Mammary epithelial cell (primary cell): ENCODE measurements at regions of chr11 and their contacts with region 1.

Region 1: DNA sequence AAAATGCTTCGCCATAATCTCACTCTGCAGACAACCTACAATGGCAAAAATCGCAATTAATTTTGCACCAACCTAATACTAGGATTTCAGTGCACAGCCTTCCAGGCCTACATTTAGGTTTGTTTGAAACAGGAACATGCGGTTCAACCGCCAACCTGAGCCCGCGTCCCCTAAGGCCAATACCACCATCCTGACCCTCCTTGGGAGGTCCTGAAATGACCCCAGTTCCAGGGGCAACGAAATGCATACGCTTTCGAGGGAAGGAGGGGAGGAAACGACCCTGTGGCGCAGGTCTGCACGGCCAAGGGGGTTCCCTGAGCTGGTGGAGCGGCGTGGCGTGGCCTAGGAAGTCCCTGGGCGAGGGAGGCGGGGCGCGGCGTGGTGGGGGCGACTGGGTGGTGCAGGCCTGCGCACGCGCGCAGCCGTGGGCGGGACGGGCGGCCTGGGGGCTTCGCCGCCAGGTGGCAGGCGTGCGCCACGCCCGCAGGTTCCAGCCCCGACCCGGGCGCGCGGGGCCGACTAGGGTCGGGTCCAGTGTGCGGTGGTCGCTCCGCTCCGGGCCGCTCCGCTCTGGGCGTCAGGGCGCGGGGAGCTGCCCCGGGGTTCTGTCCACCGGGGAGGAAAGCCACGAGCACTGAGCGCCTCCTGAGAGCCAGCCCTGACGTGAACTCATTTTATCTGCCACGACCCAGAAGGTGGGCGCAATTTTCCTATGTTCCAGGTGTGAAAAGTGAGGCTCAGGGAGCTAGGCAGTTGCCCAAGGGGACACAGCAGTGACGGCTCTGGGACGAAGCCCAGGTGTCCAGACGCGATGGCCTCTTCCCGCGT is 94.1 kb downstream of the SWAP70 start:
- DNase-seq: peak; percentile 57
- H3K4me3 ChIP-seq: peak overlapping the region; percentile 41 to 47 (median 43)
- H3K27ac ChIP-seq: peak overlapping the region; percentile 79
- H3K4me1 ChIP-seq: peaks cover 72% of the 10 kb centered on the region
- H3K27me3 ChIP-seq: no peaks in the 10 kb centered on the region
- CTCF ChIP-seq: peak; percentile 42 to 55

Region 2: GRCh38 chr11:9565822-9566560 is 192.0 kb before region 1 on chr11:
- CTCF ChIA-PET with region 1: no interaction called
- dilution Hi-C with region 1: no loop called
- in situ Hi-C with region 1: no loop called
- intact Hi-C with region 1: loop called (anchors 2 kb)
- DNase-seq: peak; percentile 100
- H3K4me3 ChIP-seq: peak overlapping the region in 1 of 3 experiments; percentile 12
- H3K27ac ChIP-seq: peak overlapping the region; percentile 100
- H3K4me1 ChIP-seq: peaks cover 53% of the 10 kb centered on the region
- H3K27me3 ChIP-seq: no peaks in the 10 kb centered on the region
- CTCF ChIP-seq: no peak

Region 3: GRCh38 chr11:9802291-9802861 is 44.4 kb after region 1 on chr11:
- CTCF ChIA-PET with region 1: no interaction called
- dilution Hi-C with region 1: no loop called
- in situ Hi-C with region 1: no loop called
- intact Hi-C with region 1: loop called (anchors 2 kb)
- DNase-seq: peak; percentile 83
- H3K4me3 ChIP-seq: no peak overlapping the region
- H3K27ac ChIP-seq: peak overlapping the region; percentile 89
- H3K4me1 ChIP-seq: peaks cover 29% of the 10 kb centered on the region
- H3K27me3 ChIP-seq: no peaks in the 10 kb centered on the region
- CTCF ChIP-seq: no peak

Region 4: DNA sequence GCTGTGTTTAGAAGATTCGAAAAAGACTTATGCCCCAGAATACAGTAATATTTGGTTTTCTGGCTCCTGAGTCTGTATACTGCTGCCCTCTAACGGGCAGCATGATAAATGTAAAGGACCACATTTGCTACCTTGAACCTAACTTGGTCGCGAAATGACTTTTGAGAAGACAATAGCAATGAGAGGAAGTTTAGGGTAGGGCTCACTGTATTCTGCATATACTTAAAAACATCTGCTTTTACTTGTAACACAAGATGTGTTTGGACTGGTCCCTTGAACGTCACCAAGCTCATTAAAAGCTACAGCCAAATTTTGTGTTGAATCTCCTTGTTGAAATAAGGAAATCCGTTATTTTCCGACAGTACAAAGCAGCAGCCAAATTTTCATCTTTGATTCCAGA is 215.0 kb after region 1 on chr11:
- CTCF ChIA-PET with region 1: interaction called, 9 read pairs
- dilution Hi-C with region 1: no loop called
- in situ Hi-C with region 1: loop called (anchors 10 kb)
- intact Hi-C with region 1: loop called (anchors 1 kb)
- DNase-seq: peak; percentile 39
- H3K4me3 ChIP-seq: no peak overlapping the region
- H3K27ac ChIP-seq: no peak overlapping the region
- H3K4me1 ChIP-seq: no peaks in the 10 kb centered on the region
- H3K27me3 ChIP-seq: no peaks in the 10 kb centered on the region
- CTCF ChIP-seq: peak; percentile 75 to 83

Region 5: GRCh38 chr11:10208131-10208575 is 450.1 kb after region 1 on chr11:
- CTCF ChIA-PET with region 1: no interaction called
- dilution Hi-C with region 1: no loop called
- in situ Hi-C with region 1: no loop called
- intact Hi-C with region 1: loop called (anchors 10 kb)
- DNase-seq: peak; percentile 44
- H3K4me3 ChIP-seq: no peak overlapping the region
- H3K27ac ChIP-seq: no peak overlapping the region
- H3K4me1 ChIP-seq: no peaks in the 10 kb centered on the region
- H3K27me3 ChIP-seq: no peaks in the 10 kb centered on the region
- CTCF ChIP-seq: peak; percentile 62 to 65

Region 6: DNA sequence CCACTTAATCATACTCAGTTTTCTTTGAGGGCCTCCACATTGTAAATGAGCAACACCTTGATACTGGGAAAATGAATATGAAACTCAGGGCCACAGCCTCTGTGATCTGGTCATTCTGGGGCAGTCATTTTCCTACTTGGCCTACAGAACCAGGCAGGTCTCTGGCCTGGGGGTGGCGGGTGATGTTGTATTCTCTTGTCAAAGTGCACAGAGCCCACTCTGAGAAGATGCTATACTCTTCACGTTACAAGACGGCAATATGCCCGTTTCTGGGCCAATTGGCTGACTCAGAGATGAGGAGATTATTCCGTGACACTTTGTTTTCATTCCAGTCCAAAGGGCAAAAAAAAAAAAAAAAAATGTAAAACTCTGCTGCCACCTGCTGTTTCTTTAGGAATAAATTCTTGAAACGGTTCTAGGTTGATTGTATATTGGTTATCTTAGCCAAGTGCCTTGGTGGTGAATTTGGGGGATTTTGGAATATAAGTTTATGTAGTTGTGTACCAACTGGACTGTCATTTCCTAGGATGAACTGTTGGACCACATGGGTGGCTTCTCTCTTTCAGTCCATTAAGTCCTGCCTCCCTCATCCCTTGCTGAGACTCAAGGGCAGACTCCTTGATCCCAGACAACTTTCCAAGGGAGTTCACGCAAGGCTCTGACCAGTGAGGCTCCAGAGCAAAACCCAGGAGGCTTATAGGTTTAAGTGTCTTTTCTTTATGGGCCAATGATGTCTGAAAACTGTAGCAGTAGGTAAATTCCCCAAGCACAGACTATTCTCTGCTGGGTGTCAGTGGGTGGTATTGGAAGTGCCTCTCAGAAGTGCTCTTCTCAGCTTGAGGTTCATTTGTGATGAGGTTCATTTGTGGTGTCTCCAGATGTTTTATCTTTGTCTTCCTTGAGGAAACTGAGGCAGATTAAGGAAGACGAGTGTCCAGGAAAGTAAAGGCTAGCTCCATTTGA is 565.1 kb after region 1 on chr11:
- CTCF ChIA-PET with region 1: no interaction called
- dilution Hi-C with region 1: no loop called
- in situ Hi-C with region 1: loop called (anchors 10 to 25 kb)
- intact Hi-C with region 1: loop called (anchors 1 kb)
- DNase-seq: peak; percentile 84
- H3K4me3 ChIP-seq: no peak overlapping the region
- H3K27ac ChIP-seq: peak overlapping the region; percentile 57
- H3K4me1 ChIP-seq: peaks cover 6% of the 10 kb centered on the region
- H3K27me3 ChIP-seq: no peaks in the 10 kb centered on the region
- CTCF ChIP-seq: peak; percentile 42 to 49

Region 7: DNA sequence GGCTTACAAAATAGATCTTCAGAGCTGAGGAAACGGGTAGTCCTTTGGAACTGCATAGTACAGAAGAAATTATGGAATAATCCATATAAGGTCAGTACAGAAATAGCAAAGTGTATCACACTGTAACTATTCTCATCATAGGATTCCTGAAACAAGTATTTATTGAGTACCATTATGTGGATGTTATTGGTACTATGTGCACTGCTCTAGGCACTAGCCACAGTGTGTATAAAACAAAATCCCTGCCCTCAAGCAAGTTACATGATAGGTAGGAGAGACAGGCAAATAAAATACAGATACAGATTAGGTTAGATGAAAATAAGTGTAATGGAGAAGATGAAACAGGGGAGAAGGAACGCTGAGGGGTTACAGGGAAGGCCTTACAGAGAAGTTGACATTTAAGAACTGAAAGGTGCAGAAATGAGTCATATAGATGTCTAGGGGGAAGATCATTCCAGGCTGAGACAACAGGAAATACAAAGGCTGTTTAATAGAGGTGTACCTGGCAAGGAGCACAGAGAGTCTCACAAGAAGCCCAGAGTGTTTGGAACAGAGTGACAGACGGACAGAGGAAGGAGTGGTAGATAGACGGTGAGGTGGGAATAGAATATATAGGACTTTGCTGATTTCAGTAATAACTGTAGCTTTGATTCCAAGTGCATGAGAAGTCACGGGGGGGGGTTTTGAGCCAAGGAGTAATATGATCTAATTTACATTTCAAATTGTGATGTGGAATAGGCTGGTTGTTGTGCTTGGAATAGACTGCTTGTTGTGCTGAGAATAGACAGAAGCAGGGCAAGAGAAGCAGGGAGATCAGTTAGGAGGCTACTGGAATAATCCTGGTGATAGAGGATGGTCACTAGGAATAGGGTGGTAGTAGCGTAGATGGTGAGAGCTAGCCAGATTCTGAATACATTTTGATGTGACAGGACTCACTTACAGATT is 769.2 kb after region 1 on chr11:
- CTCF ChIA-PET with region 1: no interaction called
- dilution Hi-C with region 1: no loop called
- in situ Hi-C with region 1: no loop called
- intact Hi-C with region 1: loop called (anchors 10 kb)
- DNase-seq: peak; percentile 69
- H3K4me3 ChIP-seq: no peak overlapping the region
- H3K27ac ChIP-seq: peak overlapping the region; percentile 39
- H3K4me1 ChIP-seq: peaks cover 12% of the 10 kb centered on the region
- H3K27me3 ChIP-seq: no peaks in the 10 kb centered on the region
- CTCF ChIP-seq: no peak